GM12878 (cell line): ENCODE measurements at regions of chr14 and their contacts with region 1.

Region 1: DNA sequence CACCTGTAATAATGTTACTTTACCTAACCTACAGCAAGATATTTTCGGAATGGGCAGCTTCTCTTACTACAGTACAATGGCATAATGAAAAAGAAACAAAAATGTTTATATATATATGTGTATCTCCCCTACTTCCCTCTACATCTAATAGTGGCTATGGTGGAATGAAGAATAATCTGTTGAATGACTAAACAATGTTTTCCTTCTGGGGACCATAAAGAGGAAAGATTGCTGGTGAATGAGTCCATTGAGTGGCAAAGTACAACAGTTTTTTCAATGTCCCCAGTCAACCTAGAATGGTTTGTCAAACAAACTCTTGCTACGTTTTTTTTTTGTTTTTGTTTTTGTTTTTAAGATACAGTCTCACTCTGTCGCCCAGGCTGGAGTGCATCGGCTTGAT is 47.2 kb downstream of the RALGAPA1 start:
- DNase-seq: no peak
- ATAC-seq: no peak
- H3K4me3 ChIP-seq: no peak overlapping the region
- H3K27ac ChIP-seq: no peak overlapping the region
- H3K4me1 ChIP-seq: no peaks in the 10 kb centered on the region
- H3K27me3 ChIP-seq: no peaks in the 10 kb centered on the region
- CTCF ChIP-seq: no peak
- EP300 ChIP-seq: no peak
- POLR2A ChIP-seq: no peak
- RAD21 ChIP-seq: no peak

Region 2: GRCh38 chr14:35747379-35747778 is 14.5 kb before region 1 on chr14:
- CTCF ChIA-PET with region 1: no interaction called
- POLR2A ChIA-PET with region 1: no interaction called
- RAD21 ChIA-PET with region 1: no interaction called
- SMC1A ChIA-PET with region 1: interaction called, 3 read pairs
- in situ Hi-C with region 1: no loop called
- intact Hi-C with region 1: loop called (anchors 2 kb)
- DNase-seq: no peak
- ATAC-seq: no peak
- H3K4me3 ChIP-seq: no peak overlapping the region
- H3K27ac ChIP-seq: no peak overlapping the region
- H3K4me1 ChIP-seq: no peaks in the 10 kb centered on the region
- H3K27me3 ChIP-seq: no peaks in the 10 kb centered on the region
- CTCF ChIP-seq: no peak
- EP300 ChIP-seq: no peak
- POLR2A ChIP-seq: no peak
- RAD21 ChIP-seq: no peak

Region 3: DNA sequence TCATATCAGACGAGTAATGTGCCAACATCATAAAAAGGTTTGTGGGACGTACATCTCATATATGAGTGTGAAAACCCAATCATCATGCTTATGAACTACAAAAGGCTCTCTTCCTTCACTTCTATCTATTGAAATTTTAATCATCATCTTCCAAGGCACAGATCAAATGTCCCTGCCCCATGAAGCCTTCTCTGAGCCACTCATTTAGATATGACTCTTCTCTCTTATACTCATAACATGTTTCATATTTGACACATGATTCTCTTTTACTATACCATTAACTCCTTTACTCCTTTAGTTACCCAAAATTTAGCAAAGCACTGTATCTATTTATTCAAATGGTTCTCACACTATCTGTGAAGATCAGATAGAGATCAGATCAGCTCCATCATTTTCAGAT is 24.9 kb after region 1 on chr14:
- CTCF ChIA-PET with region 1: no interaction called
- POLR2A ChIA-PET with region 1: no interaction called
- RAD21 ChIA-PET with region 1: no interaction called
- SMC1A ChIA-PET with region 1: no interaction called
- in situ Hi-C with region 1: no loop called
- intact Hi-C with region 1: no loop called
- DNase-seq: no peak
- ATAC-seq: no peak
- H3K4me3 ChIP-seq: no peak overlapping the region
- H3K27ac ChIP-seq: no peak overlapping the region
- H3K4me1 ChIP-seq: no peaks in the 10 kb centered on the region
- H3K27me3 ChIP-seq: no peaks in the 10 kb centered on the region
- CTCF ChIP-seq: no peak
- EP300 ChIP-seq: no peak
- POLR2A ChIP-seq: no peak
- RAD21 ChIP-seq: no peak

Region 4: DNA sequence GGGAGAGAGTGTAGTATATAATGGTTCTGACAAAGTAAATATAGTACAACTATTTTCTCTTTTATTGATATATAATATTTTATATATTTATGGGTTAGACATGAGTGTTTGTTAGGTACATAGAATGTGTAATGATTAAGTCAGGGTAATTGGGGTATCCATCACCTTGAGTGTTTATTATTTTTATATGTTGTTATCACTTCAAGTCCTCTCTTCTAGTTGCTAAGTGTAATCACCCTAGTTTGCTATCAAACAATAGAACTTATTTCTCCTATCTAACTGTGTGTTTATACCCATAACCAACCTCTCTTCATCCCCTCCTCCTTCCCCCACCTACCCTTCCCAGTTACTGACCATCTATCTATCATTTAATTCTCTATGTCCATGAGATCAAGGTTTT is 128.4 kb after region 1 on chr14:
- CTCF ChIA-PET with region 1: no interaction called
- POLR2A ChIA-PET with region 1: no interaction called
- RAD21 ChIA-PET with region 1: no interaction called
- SMC1A ChIA-PET with region 1: no interaction called
- in situ Hi-C with region 1: no loop called
- intact Hi-C with region 1: no loop called
- DNase-seq: no peak
- ATAC-seq: no peak
- H3K4me3 ChIP-seq: no peak overlapping the region
- H3K27ac ChIP-seq: no peak overlapping the region
- H3K4me1 ChIP-seq: no peaks in the 10 kb centered on the region
- H3K27me3 ChIP-seq: no peaks in the 10 kb centered on the region
- CTCF ChIP-seq: no peak
- EP300 ChIP-seq: no peak
- POLR2A ChIP-seq: no peak
- RAD21 ChIP-seq: no peak